Right cardiac atrium (tissue), 5 donors: ENCODE measurements at regions of chr17 and their contacts with region 1.

Region 1: DNA sequence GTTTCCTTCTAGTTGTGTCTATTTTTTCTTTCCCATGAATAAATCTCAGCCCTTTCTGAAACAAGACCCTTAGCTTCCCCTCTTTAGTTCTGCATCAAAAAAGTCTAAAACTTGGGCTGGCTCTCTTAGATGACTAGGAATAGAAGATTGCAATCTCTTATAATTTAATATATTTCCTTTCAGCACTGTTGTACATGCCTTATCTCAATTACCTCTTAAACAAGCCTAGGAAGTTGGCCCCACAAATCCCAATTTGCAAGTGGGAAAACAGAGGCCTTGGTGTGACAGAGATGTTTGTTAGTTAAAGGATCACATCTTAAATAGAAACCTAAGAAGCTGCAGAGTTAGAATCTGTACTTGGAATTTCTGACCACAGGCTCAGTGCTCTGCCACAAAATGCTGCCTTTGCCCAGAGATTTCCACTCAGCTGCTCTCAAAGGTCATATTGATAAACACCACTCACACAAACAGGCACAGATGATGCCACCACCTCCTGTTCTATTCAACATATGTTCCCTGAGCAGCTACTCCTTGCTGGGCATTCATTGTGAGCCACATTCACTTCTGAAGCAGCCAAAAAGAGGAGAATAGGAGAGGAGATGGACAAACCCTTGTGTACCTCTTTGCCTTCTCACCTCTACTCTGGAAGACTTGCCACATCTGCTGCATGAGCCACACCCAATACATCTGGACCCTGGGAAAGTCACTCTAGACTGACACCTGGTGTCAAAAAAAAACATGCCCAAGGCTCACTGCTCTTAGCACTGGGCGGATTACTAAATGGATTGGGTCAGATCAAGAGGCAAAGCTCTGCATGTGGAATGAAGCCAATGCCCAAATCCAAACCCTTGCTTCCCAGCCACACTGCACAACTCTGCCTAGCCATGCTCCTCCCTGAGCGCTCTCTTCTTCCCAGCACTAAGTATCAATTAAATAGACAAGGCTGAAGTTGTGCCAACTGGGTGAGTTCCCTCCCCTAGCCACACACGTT is 5.4 kb downstream of the CCDC182 start:
- DNase-seq: no peak
- ATAC-seq: peak; percentile 55 to 63
- H3K4me3 ChIP-seq: no peak overlapping the region
- H3K27ac ChIP-seq: no peak overlapping the region
- H3K4me1 ChIP-seq: no peaks in the 10 kb centered on the region
- H3K27me3 ChIP-seq: no peaks in the 10 kb centered on the region

Region 2: DNA sequence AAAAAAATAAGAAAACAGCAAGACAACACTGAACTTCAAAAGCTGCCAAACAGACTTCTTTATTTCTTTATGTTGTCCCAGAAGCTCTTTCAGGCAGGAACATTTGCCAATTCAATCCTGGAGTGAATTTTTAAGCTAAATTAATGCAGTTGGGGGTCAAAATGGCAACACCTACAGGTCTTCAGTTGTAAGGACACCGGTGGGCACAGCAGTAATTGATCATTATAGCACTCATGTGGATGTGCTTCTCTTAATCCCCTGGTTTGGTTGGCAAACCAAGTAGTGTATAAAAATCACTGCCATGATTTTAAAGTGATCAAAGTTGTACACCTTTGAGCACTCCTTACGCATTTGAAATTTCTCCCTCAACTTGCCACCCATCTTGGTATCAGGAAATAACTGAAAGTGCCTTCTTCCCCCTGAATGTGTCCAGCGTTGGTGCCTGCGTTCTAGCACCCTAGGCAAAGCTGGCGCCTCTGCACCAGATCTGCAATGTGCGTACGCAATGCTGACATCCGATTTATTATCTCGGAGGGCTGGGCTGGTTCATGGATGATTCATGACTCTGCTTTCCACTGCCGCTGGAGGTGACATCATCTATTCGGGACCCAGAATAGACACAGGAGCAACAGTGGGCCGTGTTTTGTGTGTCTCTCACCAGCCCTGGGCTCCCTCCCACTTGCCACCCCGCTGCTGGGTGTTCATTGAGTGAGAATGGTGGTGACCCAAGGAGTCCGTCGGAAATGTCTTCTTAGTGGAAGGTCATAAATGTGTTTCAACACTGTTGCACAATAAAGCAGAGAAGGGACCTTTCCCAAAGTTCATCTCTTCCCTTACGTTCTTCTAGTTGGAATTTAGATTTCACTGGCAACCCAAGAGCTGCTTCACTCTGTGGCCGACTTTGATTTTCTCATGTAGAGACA is 198.0 kb before region 1 on chr17:
- intact Hi-C with region 1: no loop called
- DNase-seq: peak; percentile 84 to 89 (median 84)
- ATAC-seq: peak; percentile 94 to 95
- H3K4me3 ChIP-seq: no peak overlapping the region
- H3K27ac ChIP-seq: peak overlapping the region; percentile 82
- H3K4me1 ChIP-seq: peaks cover 14% of the 10 kb centered on the region
- H3K27me3 ChIP-seq: no peaks in the 10 kb centered on the region

Region 3: DNA sequence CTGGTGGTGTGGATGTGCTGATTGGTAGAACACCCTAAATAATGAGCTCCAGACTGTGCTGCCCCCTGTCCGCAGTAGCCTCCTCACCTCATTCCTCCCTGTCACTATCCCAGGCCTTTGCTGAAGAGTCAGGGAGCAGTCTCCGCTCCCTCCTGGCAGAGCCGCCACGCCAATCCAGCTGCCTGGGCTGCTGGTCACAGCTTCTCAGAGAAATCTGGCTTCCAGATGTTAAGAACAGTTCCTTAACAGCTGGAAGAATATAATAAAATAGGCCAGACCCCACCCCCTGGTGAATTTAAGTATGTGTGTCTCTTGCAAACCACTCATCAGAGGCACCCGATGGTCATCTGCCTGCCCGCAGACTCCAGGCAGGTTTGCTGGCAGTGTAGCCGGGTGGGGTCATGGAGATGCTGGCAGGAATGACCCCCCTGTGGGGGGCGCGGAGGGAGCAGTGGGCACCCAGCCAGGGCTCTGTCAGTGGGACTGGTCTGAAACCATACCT is 155.6 kb before region 1 on chr17:
- intact Hi-C with region 1: no loop called
- DNase-seq: peak in 1 of 3 donors; percentile 63
- ATAC-seq: no peak
- H3K4me3 ChIP-seq: no peak overlapping the region
- H3K27ac ChIP-seq: no peak overlapping the region
- H3K4me1 ChIP-seq: peaks cover 6% of the 10 kb centered on the region
- H3K27me3 ChIP-seq: no peaks in the 10 kb centered on the region

Region 4: GRCh38 chr17:57604771-57605674 is 134.7 kb before region 1 on chr17:
- intact Hi-C with region 1: loop called in 1 of 4 experiments (anchors 10 kb)
- DNase-seq: peak; percentile 54 to 81 (median 78)
- ATAC-seq: peak; percentile 66 to 74
- H3K4me3 ChIP-seq: no peak overlapping the region
- H3K27ac ChIP-seq: peak overlapping the region; percentile 77
- H3K4me1 ChIP-seq: peaks cover 11% of the 10 kb centered on the region
- H3K27me3 ChIP-seq: no peaks in the 10 kb centered on the region

Region 5: GRCh38 chr17:57946798-57947358 is 207.2 kb after region 1 on chr17:
- intact Hi-C with region 1: no loop called
- DNase-seq: peak in 1 of 3 donors; percentile 69
- ATAC-seq: peak; percentile 65 to 76
- H3K4me3 ChIP-seq: peak overlapping the region; percentile 18
- H3K27ac ChIP-seq: peak overlapping the region; percentile 53
- H3K4me1 ChIP-seq: peaks cover 26% of the 10 kb centered on the region
- H3K27me3 ChIP-seq: no peaks in the 10 kb centered on the region